ENCODE measurements at regions of chr14 and their contacts with region 1.

Region 1: DNA sequence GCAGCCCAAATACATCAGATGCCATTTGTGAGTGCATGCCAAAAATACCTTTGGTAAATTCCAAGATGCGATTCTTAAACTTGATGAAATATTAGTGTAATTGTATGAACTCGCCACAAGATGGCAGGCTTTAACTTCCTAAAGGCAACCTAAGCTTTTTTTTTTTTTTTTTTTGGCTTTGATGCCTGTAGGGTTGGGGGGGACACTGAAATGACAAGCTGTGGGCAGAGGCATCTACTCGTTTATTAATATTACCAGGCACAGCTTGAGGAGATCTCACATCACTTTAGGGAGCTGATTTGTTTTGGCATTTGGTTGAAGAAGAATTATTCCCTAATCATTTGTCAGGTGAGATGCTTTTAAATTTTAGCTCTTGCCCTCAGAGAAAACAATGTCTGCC is 126.7 kb upstream of the CCDC196 start:
- DNase-seq: peak; percentile 65
- H3K4me3 ChIP-seq: no peak overlapping the region
- H3K27ac ChIP-seq: no peak overlapping the region
- H3K4me1 ChIP-seq: no peaks in the 10 kb centered on the region
- H3K27me3 ChIP-seq: no peaks in the 10 kb centered on the region
- CTCF ChIP-seq: peak; percentile 72

Region 2: DNA sequence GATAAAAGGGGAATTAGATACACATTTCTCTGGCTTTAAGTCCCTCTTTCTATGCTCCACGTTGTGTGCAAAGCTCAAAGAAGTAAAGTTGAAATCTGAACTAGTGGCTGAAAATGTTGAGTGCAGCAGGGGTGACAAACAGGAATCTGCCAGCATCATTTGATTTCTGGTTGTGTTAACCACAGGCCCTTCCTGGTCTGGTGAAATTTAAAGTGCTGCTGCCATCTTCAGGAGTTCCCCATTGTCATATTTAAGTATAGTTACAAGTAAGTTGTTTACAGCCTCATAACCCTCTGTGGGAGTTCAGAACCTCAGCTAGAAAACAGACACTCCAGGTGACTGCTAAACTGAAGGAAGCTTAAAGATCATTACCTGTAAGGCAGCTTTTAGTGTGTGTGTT is 35.8 kb after region 1 on chr14:
- CTCF ChIA-PET with region 1: interaction called, 14 read pairs
- POLR2A ChIA-PET with region 1: no interaction called
- intact Hi-C with region 1: no loop called
- DNase-seq: no peak
- H3K4me3 ChIP-seq: no peak overlapping the region
- H3K27ac ChIP-seq: no peak overlapping the region
- H3K4me1 ChIP-seq: no peaks in the 10 kb centered on the region
- H3K27me3 ChIP-seq: peaks cover 4% of the 10 kb centered on the region
- CTCF ChIP-seq: no peak

Region 3: GRCh38 chr14:66403183-66403582 is 43.7 kb after region 1 on chr14:
- CTCF ChIA-PET with region 1: interaction called, 13 read pairs
- POLR2A ChIA-PET with region 1: no interaction called
- intact Hi-C with region 1: loop called (anchors 1 kb)
- DNase-seq: peak; percentile 59
- H3K4me3 ChIP-seq: no peak overlapping the region
- H3K27ac ChIP-seq: no peak overlapping the region
- H3K4me1 ChIP-seq: no peaks in the 10 kb centered on the region
- H3K27me3 ChIP-seq: no peaks in the 10 kb centered on the region
- CTCF ChIP-seq: peak; percentile 55

Region 4: DNA sequence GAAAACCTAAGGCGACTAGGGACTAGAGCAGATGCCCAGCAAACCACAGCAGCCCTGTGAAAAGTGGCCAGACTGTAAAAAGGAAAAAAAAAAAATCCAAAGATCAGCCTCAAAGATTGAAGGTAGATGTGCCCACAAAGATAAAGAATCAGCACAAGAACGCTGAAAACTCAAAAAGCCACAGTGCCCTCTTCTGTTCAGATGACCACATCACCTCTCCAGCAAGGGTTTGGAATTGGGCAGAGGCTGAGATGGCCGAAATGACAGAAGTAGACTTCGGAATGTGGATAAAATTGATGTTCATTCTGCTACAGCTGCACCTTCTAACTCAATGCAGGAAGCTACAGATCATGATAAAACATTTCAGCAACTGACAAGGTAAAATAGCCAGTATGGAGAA is 302.9 kb after region 1 on chr14:
- CTCF ChIA-PET with region 1: interaction called, 10 read pairs
- POLR2A ChIA-PET with region 1: no interaction called
- intact Hi-C with region 1: no loop called
- DNase-seq: peak; percentile 25
- H3K4me3 ChIP-seq: no peak overlapping the region
- H3K27ac ChIP-seq: no peak overlapping the region
- H3K4me1 ChIP-seq: no peaks in the 10 kb centered on the region
- H3K27me3 ChIP-seq: no peaks in the 10 kb centered on the region
- CTCF ChIP-seq: peak; percentile 58

Region 5: DNA sequence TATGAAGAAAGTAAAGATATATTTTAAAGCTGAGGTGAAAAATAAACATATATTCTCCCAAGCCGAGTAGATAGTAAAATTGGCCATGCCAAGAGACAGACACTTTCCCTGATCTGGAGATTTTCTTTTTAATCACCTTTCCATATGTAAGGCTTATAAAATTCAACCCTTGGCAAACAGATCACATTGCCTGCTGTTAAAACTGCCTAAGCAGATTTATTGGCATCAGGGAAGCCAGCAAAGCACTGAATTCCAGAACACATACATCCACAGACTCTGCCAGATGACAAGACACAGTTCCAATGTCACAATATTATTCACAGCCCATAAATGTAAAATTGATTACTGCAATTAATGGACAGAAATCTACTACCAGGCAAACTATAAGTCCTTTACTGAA is 751.5 kb after region 1 on chr14:
- CTCF ChIA-PET with region 1: interaction called, 4 read pairs
- POLR2A ChIA-PET with region 1: no interaction called
- intact Hi-C with region 1: loop called (anchors 5 kb)
- DNase-seq: no peak
- H3K4me3 ChIP-seq: no peak overlapping the region
- H3K27ac ChIP-seq: no peak overlapping the region
- H3K4me1 ChIP-seq: no peaks in the 10 kb centered on the region
- H3K27me3 ChIP-seq: no peaks in the 10 kb centered on the region
- CTCF ChIP-seq: no peak

Region 6: DNA sequence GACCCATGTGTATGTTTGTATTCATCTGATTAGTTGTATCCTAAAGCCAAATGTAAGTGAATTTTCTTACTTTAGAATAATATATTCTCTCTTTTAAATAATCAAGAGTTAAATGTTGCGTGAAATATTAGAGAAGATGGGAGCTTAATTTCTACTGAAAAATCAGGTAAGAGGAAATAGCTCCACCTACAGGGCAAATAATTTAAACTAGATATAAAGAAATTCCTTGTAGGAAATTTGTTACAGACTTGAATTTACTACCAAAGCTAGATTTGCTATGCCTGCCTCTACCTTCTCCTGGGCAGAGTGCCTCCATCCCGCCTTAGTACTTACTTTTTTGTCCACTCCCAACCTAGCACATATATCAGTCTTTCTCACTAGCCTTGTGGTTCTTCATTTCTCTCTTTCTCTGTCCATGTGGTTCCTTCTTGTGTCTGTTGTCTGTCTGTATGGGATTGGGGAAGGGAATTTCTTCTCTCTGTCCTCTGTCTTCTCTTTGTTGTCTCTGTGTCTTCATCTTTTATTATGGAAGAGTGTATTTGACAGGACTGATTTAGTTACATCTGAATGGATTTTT is 926.5 kb after region 1 on chr14:
- CTCF ChIA-PET with region 1: interaction called, 10 read pairs
- POLR2A ChIA-PET with region 1: interaction called, 8 read pairs
- intact Hi-C with region 1: no loop called
- DNase-seq: peak; percentile 74
- H3K4me3 ChIP-seq: no peak overlapping the region
- H3K27ac ChIP-seq: peak overlapping the region; percentile 56
- H3K4me1 ChIP-seq: peaks cover 49% of the 10 kb centered on the region
- H3K27me3 ChIP-seq: no peaks in the 10 kb centered on the region
- CTCF ChIP-seq: peak; percentile 67

Region 7: GRCh38 chr14:67666750-67667449 is 1307.4 kb after region 1 on chr14:
- CTCF ChIA-PET with region 1: interaction called, 11 read pairs
- POLR2A ChIA-PET with region 1: no interaction called
- intact Hi-C with region 1: no loop called
- DNase-seq: peak; percentile 74
- H3K4me3 ChIP-seq: no peak overlapping the region
- H3K27ac ChIP-seq: no peak overlapping the region
- H3K4me1 ChIP-seq: no peaks in the 10 kb centered on the region
- H3K27me3 ChIP-seq: no peaks in the 10 kb centered on the region
- CTCF ChIP-seq: peak; percentile 73

Measured in A673 (cell line).